Motor neuron (in vitro differentiated cells): ENCODE measurements at regions of chr9 and their contacts with region 1.

Region 1: GRCh38 chr9:70639853-70640814 is 225.7 kb upstream of the KLF9 start:
- ATAC-seq: peak; percentile 69 to 94 (median 82)
- H3K4me3 ChIP-seq: no peak overlapping the region
- H3K27ac ChIP-seq: no peak overlapping the region
- H3K4me1 ChIP-seq: peaks cover 0 to 2% of the 10 kb centered on the region in 2 donors

Region 2: GRCh38 chr9:70466976-70467561 is 173.1 kb before region 1 on chr9:
- in situ Hi-C with region 1: no loop called
- ATAC-seq: peak in 3 of 8 experiments; percentile 57 to 78 (median 68)
- H3K4me3 ChIP-seq: no peak overlapping the region
- H3K27ac ChIP-seq: no peak overlapping the region
- H3K4me1 ChIP-seq: peaks cover 0 to 1% of the 10 kb centered on the region in 2 donors

Region 3: GRCh38 chr9:70924895-70925547 is 284.9 kb after region 1 on chr9:
- in situ Hi-C with region 1: loop called in 2 of 9 experiments (anchors 10 to 25 kb)
- ATAC-seq: peak; percentile 44 to 99 (median 72)
- H3K4me3 ChIP-seq: no peak overlapping the region
- H3K27ac ChIP-seq: no peak overlapping the region
- H3K4me1 ChIP-seq: no peaks in the 10 kb centered on the region

Region 4: GRCh38 chr9:71249729-71250317 is 609.7 kb after region 1 on chr9:
- in situ Hi-C with region 1: loop called in 8 of 9 experiments (anchors 10 to 25 kb)
- ATAC-seq: peak; percentile 62 to 88 (median 77)
- H3K4me3 ChIP-seq: no peak overlapping the region
- H3K27ac ChIP-seq: no peak overlapping the region
- H3K4me1 ChIP-seq: peaks cover 0 to 7% of the 10 kb centered on the region in 2 donors